ENCODE measurements at regions of chr17 and their contacts with region 1.

Region 1: GRCh38 chr17:49640556-49640955 is 37.3 kb downstream of the SPOP start:
- DNase-seq: no peak
- ATAC-seq: no peak
- H3K4me3 ChIP-seq: no peak overlapping the region
- H3K4me3 Mint-ChIP-seq: no peak overlapping the region
- H3K27ac ChIP-seq: no peak overlapping the region
- H3K27ac Mint-ChIP-seq: no peak overlapping the region
- H3K4me1 ChIP-seq: peaks cover 3% of the 10 kb centered on the region
- H3K4me1 Mint-ChIP-seq: peaks cover 30% of the 10 kb centered on the region
- H3K27me3 ChIP-seq: no peaks in the 10 kb centered on the region
- H3K27me3 Mint-ChIP-seq: no peaks in the 10 kb centered on the region
- CTCF ChIP-seq: no peak

Region 2: GRCh38 chr17:49677933-49678847 is 37.6 kb after region 1 on chr17 and contains the start of gene SPOP:
- CTCF ChIA-PET with region 1: no interaction called
- POLR2A ChIA-PET with region 1: no interaction called
- intact Hi-C with region 1: loop called in 1 of 2 experiments (anchors 5 kb)
- DNase-seq: peak; percentile 97 to 100 (median 99)
- ATAC-seq: peak; percentile 94
- H3K4me3 ChIP-seq: peak within 1 kb of the TSS; percentile 76 to 81
- H3K4me3 Mint-ChIP-seq: peak within 1 kb of the TSS; percentile 97
- H3K27ac ChIP-seq: peak within 1 kb of the TSS; percentile 91 to 98
- H3K27ac Mint-ChIP-seq: peak within 1 kb of the TSS; percentile 100
- H3K4me1 ChIP-seq: peaks cover 29% of the 10 kb centered on the region
- H3K4me1 Mint-ChIP-seq: peaks cover 49% of the 10 kb centered on the region
- H3K27me3 ChIP-seq: no peaks in the 10 kb centered on the region
- H3K27me3 Mint-ChIP-seq: no peaks in the 10 kb centered on the region
- CTCF ChIP-seq: no peak
- total RNA-seq, gene SPOP: 30.5 to 34.3 TPM